ENCODE measurements at regions of chr2 and their contacts with region 1.

Region 1: GRCh38 chr2:53877556-53877955 is 17.8 kb upstream of the GPR75 start:
- DNase-seq: no peak
- ATAC-seq: no peak
- H3K4me3 Mint-ChIP-seq: no peak overlapping the region
- H3K27ac Mint-ChIP-seq: no peak overlapping the region
- H3K4me1 Mint-ChIP-seq: no peaks in the 10 kb centered on the region
- H3K27me3 Mint-ChIP-seq: no peaks in the 10 kb centered on the region
- CTCF ChIP-seq: no peak

Region 2: DNA sequence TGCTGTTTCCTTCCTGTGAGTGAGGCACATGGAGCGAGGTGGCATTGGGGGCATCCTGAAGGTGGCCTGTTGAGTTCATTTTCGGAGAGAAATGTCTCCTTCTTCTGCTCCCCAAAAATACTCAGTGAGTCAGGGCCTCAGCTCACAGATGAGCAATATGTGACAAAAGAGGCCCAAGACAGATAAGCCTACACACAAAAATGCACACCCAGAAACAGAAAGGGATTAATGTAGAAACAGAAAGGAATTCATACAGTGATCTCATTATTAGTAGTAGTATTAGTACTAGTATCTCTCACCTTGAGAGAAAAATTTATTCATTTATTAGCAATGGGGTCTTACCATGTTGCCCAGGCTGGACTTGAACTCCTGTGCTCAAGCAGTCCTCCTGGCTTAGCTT is 22.9 kb before region 1 on chr2:
- CTCF ChIA-PET with region 1: no interaction called
- POLR2A ChIA-PET with region 1: no interaction called
- intact Hi-C with region 1: no loop called
- DNase-seq: no peak
- ATAC-seq: no peak
- H3K4me3 Mint-ChIP-seq: no peak overlapping the region
- H3K27ac Mint-ChIP-seq: no peak overlapping the region
- H3K4me1 Mint-ChIP-seq: no peaks in the 10 kb centered on the region
- H3K27me3 Mint-ChIP-seq: no peaks in the 10 kb centered on the region
- CTCF ChIP-seq: no peak

Region 3: GRCh38 chr2:54139210-54139609 is 261.7 kb after region 1 on chr2:
- CTCF ChIA-PET with region 1: no interaction called
- POLR2A ChIA-PET with region 1: interaction called, 11 read pairs
- intact Hi-C with region 1: no loop called
- DNase-seq: no peak
- ATAC-seq: no peak
- H3K4me3 Mint-ChIP-seq: no peak overlapping the region
- H3K27ac Mint-ChIP-seq: no peak overlapping the region
- H3K4me1 Mint-ChIP-seq: no peaks in the 10 kb centered on the region
- H3K27me3 Mint-ChIP-seq: no peaks in the 10 kb centered on the region
- CTCF ChIP-seq: no peak

Measured in activated B cell treated with CpG ODN at 0.5 μM for 24 hours (primary cell).